Keratinocyte (primary cell): ENCODE measurements at regions of chr5 and their contacts with region 1.

Region 1: DNA sequence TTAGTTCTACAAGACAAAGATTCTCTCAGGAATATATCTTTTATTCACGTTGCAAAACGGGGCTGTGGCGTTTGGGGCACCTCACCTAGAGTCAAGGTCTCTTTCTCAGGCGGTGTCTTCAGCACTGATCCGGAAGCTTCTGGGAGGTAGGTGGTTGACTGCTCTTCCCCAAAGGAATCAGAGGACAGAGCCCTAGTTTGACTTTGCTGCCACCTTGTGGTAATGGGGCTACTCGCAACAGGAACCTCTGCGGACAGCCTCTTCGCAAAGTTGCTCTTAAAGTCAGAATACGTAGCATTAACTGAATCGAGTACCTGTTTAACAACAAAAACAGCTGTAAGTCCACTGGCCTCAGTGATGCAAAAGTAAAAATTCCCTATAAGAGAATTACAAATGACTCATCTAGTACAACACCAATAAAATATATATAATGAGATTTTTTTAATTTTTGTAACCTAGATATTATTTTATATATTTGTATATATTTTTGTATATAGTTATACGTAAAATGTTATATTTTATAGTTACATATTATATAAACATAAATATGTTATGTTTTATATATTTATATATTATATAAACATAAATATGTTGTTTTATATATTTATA is 13.3 kb upstream of the GPX8 start:
- DNase-seq: peak; percentile 63
- H3K4me3 ChIP-seq: no peak overlapping the region
- H3K27ac ChIP-seq: no peak overlapping the region
- H3K4me1 ChIP-seq: peaks cover 2% of the 10 kb centered on the region
- H3K27me3 ChIP-seq: peaks cover 6% of the 10 kb centered on the region
- CTCF ChIP-seq: peak; percentile 92 to 95 (median 95)

Region 2: DNA sequence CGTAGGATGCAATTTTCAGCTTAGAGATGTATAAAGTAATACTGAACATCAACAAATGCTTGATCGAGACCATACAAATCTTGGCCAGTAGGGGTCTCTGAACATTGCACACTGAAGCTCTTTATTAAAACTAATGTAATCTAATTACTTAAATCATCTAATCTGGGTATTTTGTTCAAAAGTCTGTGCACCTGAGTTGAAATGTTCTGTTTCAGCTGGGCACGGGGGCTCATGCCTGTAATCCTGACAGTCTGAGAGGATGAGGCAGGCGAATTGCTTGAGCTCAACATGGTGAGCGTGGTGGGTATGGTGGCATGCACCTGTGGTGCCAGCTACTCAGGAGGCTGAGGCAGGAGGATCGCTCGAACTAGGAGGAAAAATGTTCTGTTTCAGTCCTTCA is 202.3 kb before region 1 on chr5:
- dilution Hi-C with region 1: loop called (anchors 25 kb)
- DNase-seq: no peak
- H3K4me3 ChIP-seq: no peak overlapping the region
- H3K27ac ChIP-seq: no peak overlapping the region
- H3K4me1 ChIP-seq: no peaks in the 10 kb centered on the region
- H3K27me3 ChIP-seq: no peaks in the 10 kb centered on the region
- CTCF ChIP-seq: peak in 2 of 3 experiments; percentile 38 to 66